ENCODE measurements at regions of chr4 and their contacts with region 1.

Region 1: GRCh38 chr4:133270021-133270570 is 121.0 kb downstream of the PCDH10 start:
- DNase-seq: peak in 1 of 2 experiments; percentile 32
- H3K4me3 ChIP-seq: no peak overlapping the region
- H3K4me3 Mint-ChIP-seq: no peak overlapping the region
- H3K27ac Mint-ChIP-seq: no peak overlapping the region
- H3K4me1 ChIP-seq: peaks cover 9% of the 10 kb centered on the region; the same call in 1 of the 2 replicates
- H3K4me1 Mint-ChIP-seq: peaks cover 14% of the 10 kb centered on the region
- H3K27me3 ChIP-seq: no peaks in the 10 kb centered on the region
- H3K27me3 Mint-ChIP-seq: no peaks in the 10 kb centered on the region
- CTCF ChIP-seq: no peak

Region 2: GRCh38 chr4:133154725-133155124 is 115.4 kb before region 1 on chr4:
- CTCF ChIA-PET with region 1: no interaction called
- POLR2A ChIA-PET with region 1: no interaction called
- intact Hi-C with region 1: loop called (anchors 10 kb)
- DNase-seq: peak in 1 of 2 experiments; percentile 11
- H3K4me3 ChIP-seq: no peak overlapping the region
- H3K4me3 Mint-ChIP-seq: no peak overlapping the region
- H3K27ac Mint-ChIP-seq: no peak overlapping the region
- H3K4me1 ChIP-seq: no peaks in the 10 kb centered on the region
- H3K4me1 Mint-ChIP-seq: no peaks in the 10 kb centered on the region
- H3K27me3 ChIP-seq: no peaks in the 10 kb centered on the region
- H3K27me3 Mint-ChIP-seq: peaks cover 4% of the 10 kb centered on the region
- CTCF ChIP-seq: peak in 1 of 2 experiments; percentile 46

Region 3: GRCh38 chr4:133188433-133189175 is 81.5 kb before region 1 on chr4:
- CTCF ChIA-PET with region 1: no interaction called
- POLR2A ChIA-PET with region 1: no interaction called
- intact Hi-C with region 1: no loop called
- DNase-seq: no peak
- H3K4me3 ChIP-seq: no peak overlapping the region
- H3K4me3 Mint-ChIP-seq: no peak overlapping the region
- H3K27ac Mint-ChIP-seq: no peak overlapping the region
- H3K4me1 ChIP-seq: no peaks in the 10 kb centered on the region
- H3K4me1 Mint-ChIP-seq: no peaks in the 10 kb centered on the region
- H3K27me3 ChIP-seq: no peaks in the 10 kb centered on the region
- H3K27me3 Mint-ChIP-seq: no peaks in the 10 kb centered on the region
- CTCF ChIP-seq: no peak